PC-9 (cell line): ENCODE measurements at regions of chr7 and their contacts with region 1.

Region 1: DNA sequence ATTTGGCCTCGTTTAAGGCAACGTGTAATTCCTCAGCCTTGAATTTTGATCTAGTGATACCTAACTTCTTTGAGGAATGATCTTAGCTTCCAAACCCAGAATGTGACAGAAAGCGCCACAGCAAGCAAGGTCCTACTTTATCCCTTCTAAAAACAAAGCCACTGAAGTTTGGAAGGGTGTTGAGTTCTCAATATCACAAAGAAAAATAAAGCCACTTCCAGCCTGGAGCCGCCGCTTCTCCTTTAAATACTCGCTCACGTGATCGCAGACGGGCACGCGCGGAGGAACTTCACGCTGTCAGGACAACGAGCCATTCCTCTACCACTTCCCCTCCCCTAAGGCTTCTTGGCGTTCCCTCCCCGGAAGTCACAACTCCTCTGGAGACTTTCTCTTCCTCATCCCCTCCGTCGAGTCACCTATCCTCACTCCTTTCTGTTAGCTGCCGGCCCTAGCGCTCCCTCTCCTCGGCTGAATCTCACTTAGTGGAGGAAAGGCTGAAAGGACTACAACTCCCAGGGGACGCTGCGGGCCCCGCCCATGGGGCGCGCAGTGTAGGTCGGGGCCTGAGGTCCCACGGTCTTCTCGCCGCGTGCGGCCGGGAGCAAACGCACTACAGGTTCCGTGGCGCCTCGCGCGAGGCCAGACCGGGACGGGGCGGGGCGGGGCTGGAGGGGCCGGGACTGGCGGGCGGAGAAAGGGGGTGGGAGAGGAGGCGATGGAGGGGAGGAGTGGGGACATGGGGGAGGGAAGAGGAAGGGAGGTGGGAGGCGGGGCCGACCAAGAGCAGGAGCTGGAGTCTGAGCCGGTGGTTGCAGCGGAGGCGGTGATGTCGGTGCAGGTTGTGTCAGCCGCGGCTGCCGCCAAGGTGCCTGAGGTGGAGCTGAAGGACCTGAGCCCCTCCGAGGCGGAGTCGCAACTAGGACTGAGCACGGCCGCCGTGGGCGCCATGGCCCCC is at the start of gene AHCYL2:
- DNase-seq: peak; percentile 95 to 98
- H3K4me3 ChIP-seq: peak within 1 kb of the TSS; percentile 75
- H3K27ac ChIP-seq: peak within 1 kb of the TSS; percentile 74
- H3K4me1 ChIP-seq: peaks cover 19% of the 10 kb centered on the region
- H3K27me3 ChIP-seq: no peaks in the 10 kb centered on the region
- CTCF ChIP-seq: no peak
- total RNA-seq, gene AHCYL2: 15.7 and 16.2 TPM in 2 replicates

Region 2: GRCh38 chr7:128946923-128947830 is 277.4 kb before region 1 on chr7:
- CTCF ChIA-PET with region 1: no interaction called
- POLR2A ChIA-PET with region 1: no interaction called
- intact Hi-C with region 1: no loop called
- DNase-seq: no peak
- H3K4me3 ChIP-seq: no peak overlapping the region
- H3K27ac ChIP-seq: no peak overlapping the region
- H3K4me1 ChIP-seq: no peaks in the 10 kb centered on the region
- H3K27me3 ChIP-seq: no peaks in the 10 kb centered on the region
- CTCF ChIP-seq: no peak; the same call in 1 of the 2 replicates

Region 3: GRCh38 chr7:129089521-129090212 is 134.9 kb before region 1 on chr7:
- CTCF ChIA-PET with region 1: no interaction called
- POLR2A ChIA-PET with region 1: no interaction called
- intact Hi-C with region 1: no loop called
- DNase-seq: no peak
- H3K4me3 ChIP-seq: no peak overlapping the region
- H3K27ac ChIP-seq: no peak overlapping the region
- H3K4me1 ChIP-seq: no peaks in the 10 kb centered on the region
- H3K27me3 ChIP-seq: no peaks in the 10 kb centered on the region
- CTCF ChIP-seq: no peak

Region 4: DNA sequence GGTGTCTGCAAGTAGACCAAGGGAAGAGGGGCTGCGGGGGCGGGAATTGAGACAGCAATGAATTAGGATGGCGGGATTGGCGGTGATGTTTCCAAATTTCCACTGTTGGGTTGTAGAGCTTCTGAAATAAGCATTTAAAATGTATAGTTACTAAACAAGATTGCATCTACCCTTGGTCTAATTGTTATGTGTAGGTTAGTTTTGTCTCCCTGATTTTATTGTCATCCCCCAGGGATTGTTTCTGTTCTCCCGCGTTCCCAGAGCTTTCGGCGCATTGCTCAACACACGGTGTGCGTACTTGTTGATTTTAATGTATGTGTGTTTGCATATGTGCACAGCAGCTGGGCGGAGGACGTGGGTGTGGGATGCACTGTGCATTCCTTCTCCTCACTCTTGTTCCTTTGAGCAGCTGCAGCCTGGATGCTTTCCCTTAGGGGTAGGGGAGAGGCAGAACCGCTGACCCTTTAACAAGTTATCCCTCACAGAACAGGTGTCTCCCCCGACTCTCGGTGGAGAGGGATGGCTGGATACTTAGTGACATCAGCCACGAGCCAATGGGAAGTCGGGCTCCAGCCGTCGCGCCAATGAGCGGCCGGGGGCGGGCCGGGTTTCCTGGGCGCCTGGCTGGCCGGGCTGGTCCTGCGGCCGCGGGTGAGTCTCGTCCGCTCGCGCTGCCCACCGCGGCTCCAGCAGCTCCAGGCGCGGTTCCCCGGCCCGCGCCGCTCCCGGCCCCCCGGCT is 80.3 kb before region 1 on chr7 and contains the start of gene TSPAN33:
- CTCF ChIA-PET with region 1: no interaction called
- POLR2A ChIA-PET with region 1: no interaction called
- intact Hi-C with region 1: no loop called
- DNase-seq: peak; percentile 66 to 73
- H3K4me3 ChIP-seq: peak within 1 kb of the TSS; percentile 72
- H3K27ac ChIP-seq: no peak within 1 kb of the TSS
- H3K4me1 ChIP-seq: peaks cover 7% of the 10 kb centered on the region; the same call in 1 of the 2 replicates
- H3K27me3 ChIP-seq: peaks cover 46% of the 10 kb centered on the region
- CTCF ChIP-seq: no peak
- total RNA-seq, gene TSPAN33: 5.8 and 9.6 TPM in 2 replicates

Region 5: DNA sequence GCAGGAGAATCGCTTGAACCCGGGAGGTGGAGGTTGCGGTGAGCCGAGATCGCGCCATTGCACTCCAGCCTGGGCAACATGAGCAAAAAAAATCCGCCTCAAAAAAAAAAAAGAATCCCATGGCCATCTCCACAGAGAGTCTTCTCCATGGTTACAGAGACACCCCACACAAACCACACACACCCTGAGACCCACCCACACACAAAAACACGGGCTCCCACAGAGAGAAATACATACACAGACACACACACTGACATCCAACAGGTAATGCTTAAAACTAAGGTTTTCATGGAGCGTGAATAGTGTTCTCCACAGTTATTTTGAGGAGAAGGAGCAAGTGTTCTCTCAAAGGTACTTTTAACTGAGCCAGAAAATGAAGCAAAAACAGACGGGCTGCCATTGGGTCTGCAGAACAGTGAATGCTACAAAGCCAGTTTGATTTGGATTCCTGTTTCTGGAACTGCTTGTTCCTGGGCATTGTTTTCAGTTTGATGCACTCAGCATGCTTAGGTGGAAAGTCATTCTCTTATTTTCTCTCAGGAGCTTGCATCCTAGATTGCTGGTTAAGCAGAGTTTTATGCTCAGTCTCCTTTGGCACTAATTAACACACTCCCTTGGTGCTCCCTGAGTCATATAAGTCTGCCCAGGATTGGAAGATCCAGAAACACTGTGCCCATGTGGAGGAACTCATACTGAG is 15.7 kb after region 1 on chr7:
- CTCF ChIA-PET with region 1: no interaction called
- POLR2A ChIA-PET with region 1: interaction called, 16 read pairs
- intact Hi-C with region 1: no loop called
- DNase-seq: no peak
- H3K4me3 ChIP-seq: no peak overlapping the region
- H3K27ac ChIP-seq: no peak overlapping the region
- H3K4me1 ChIP-seq: no peaks in the 10 kb centered on the region
- H3K27me3 ChIP-seq: no peaks in the 10 kb centered on the region
- CTCF ChIP-seq: no peak

Region 6: GRCh38 chr7:129298268-129298893 is 73.9 kb after region 1 on chr7:
- CTCF ChIA-PET with region 1: interaction called, 5 read pairs
- POLR2A ChIA-PET with region 1: no interaction called
- intact Hi-C with region 1: loop called (anchors 2 kb)
- DNase-seq: peak in 1 of 2 experiments; percentile 50
- H3K4me3 ChIP-seq: no peak overlapping the region
- H3K27ac ChIP-seq: no peak overlapping the region
- H3K4me1 ChIP-seq: peaks cover 18% of the 10 kb centered on the region
- H3K27me3 ChIP-seq: no peaks in the 10 kb centered on the region
- CTCF ChIP-seq: peak; percentile 82